ENCODE measurements at regions of chr2 and their contacts with region 1.

Region 1: DNA sequence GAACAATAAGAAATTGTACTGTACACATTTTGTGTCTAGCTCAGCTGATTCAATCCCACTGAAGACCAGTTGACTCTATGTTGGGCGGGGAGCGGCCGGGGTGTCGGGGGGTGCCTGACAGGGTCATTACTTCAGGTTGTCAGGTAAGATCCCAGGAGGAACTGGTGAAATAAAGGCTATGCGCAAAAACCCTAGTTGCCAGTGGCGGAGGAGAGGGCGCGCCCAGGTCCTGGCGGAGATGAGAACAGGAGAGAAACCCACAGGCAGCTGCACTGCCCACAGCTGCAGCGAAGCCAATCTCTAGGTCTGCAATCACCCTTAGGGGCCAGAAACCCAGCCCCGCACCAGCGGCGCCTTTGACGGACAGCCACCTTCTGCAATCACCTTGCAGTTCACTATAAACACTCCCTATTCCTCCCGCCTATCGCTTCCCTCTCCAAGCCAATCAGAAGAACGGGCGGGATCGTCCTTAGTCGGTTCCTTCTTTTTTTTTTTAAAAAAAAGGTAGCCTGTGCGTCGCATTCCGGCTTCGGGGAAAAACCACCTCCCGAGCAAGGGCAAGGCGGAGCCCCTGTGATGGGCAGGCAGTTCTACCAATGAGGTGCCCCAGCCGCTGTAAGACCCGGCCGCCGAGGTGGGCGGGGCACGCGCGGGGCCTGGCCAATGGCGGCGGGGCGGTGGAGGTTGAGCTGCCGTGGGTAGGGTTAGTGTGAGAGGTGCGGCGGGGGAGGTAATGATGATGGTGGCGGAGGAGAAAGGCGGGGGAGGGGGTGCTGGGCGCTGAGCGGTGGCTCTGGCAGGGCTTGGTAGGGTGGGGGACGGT is at the start of gene EHBP1:
- DNase-seq: peak; percentile 100
- total RNA-seq, gene EHBP1: 19.4 TPM

Region 2: GRCh38 chr2:62505750-62506420 is 199.3 kb before region 1 on chr2 and contains the start of gene TMEM17:
- intact Hi-C with region 1: loop called (anchors 2 kb)
- DNase-seq: peak; percentile 94
- total RNA-seq, gene TMEM17: 1.4 TPM

Region 3: GRCh38 chr2:63096491-63096890 is 391.3 kb after region 1 on chr2:
- intact Hi-C with region 1: no loop called
- DNase-seq: no peak

Measured in cardiac septum (tissue), 1 donor.